Endothelial cell of umbilical vein (primary cell): ENCODE measurements at regions of chr2 and their contacts with region 1.

Region 1: GRCh38 chr2:25851740-25852503 is 26.4 kb downstream of the ASXL2 start:
- DNase-seq: peak; percentile 81
- H3K4me3 ChIP-seq: no peak overlapping the region
- H3K27ac ChIP-seq: peak overlapping the region; percentile 50
- H3K4me1 ChIP-seq: peaks cover 5% of the 10 kb centered on the region
- H3K27me3 ChIP-seq: no peaks in the 10 kb centered on the region
- CTCF ChIP-seq: peak; percentile 45 to 48
- POLR2A ChIP-seq: no peak

Region 2: GRCh38 chr2:25618642-25619037 is 233.3 kb before region 1 on chr2:
- CTCF ChIA-PET with region 1: no interaction called
- POLR2A ChIA-PET with region 1: no interaction called
- dilution Hi-C with region 1: no loop called
- intact Hi-C with region 1: loop called (anchors 10 kb)
- DNase-seq: peak; percentile 97
- H3K4me3 ChIP-seq: peak overlapping the region in 2 of 3 experiments; percentile 34 to 65
- H3K27ac ChIP-seq: peak overlapping the region; percentile 99
- H3K4me1 ChIP-seq: peaks cover 45% of the 10 kb centered on the region
- H3K27me3 ChIP-seq: no peaks in the 10 kb centered on the region
- CTCF ChIP-seq: no peak
- POLR2A ChIP-seq: no peak

Region 3: GRCh38 chr2:25835906-25836305 is 16.0 kb before region 1 on chr2:
- CTCF ChIA-PET with region 1: interaction called, 11 read pairs
- POLR2A ChIA-PET with region 1: no interaction called
- dilution Hi-C with region 1: no loop called
- intact Hi-C with region 1: no loop called
- DNase-seq: no peak
- H3K4me3 ChIP-seq: no peak overlapping the region
- H3K27ac ChIP-seq: no peak overlapping the region
- H3K4me1 ChIP-seq: no peaks in the 10 kb centered on the region
- H3K27me3 ChIP-seq: no peaks in the 10 kb centered on the region
- CTCF ChIP-seq: no peak
- POLR2A ChIP-seq: no peak

Region 4: GRCh38 chr2:25867396-25868003 is 15.6 kb after region 1 on chr2:
- CTCF ChIA-PET with region 1: interaction called, 14 read pairs
- POLR2A ChIA-PET with region 1: no interaction called
- dilution Hi-C with region 1: no loop called
- intact Hi-C with region 1: no loop called
- DNase-seq: no peak
- H3K4me3 ChIP-seq: no peak overlapping the region
- H3K27ac ChIP-seq: no peak overlapping the region
- H3K4me1 ChIP-seq: no peaks in the 10 kb centered on the region
- H3K27me3 ChIP-seq: no peaks in the 10 kb centered on the region
- CTCF ChIP-seq: no peak
- POLR2A ChIP-seq: no peak

Region 5: GRCh38 chr2:25878361-25879132 is 26.6 kb after region 1 on chr2 and contains the start of gene ASXL2:
- CTCF ChIA-PET with region 1: interaction called, 12 read pairs
- POLR2A ChIA-PET with region 1: interaction called, 3 read pairs
- dilution Hi-C with region 1: no loop called
- intact Hi-C with region 1: no loop called
- DNase-seq: peak; percentile 99
- H3K4me3 ChIP-seq: peak within 1 kb of the TSS; percentile 54 to 84 (median 77)
- H3K27ac ChIP-seq: peak within 1 kb of the TSS; percentile 67
- H3K4me1 ChIP-seq: peaks cover 16% of the 10 kb centered on the region
- H3K27me3 ChIP-seq: peaks cover 0 to 5% of the 10 kb centered on the region in 2 experiments
- CTCF ChIP-seq: no peak
- POLR2A ChIP-seq: peak; percentile 91
- total RNA-seq, gene ASXL2: 30.6 and 33.8 TPM in 2 replicates

Region 6: GRCh38 chr2:25951071-25951547 is 99.2 kb after region 1 on chr2:
- CTCF ChIA-PET with region 1: interaction called, 8 read pairs
- POLR2A ChIA-PET with region 1: no interaction called
- dilution Hi-C with region 1: no loop called
- intact Hi-C with region 1: loop called (anchors 1 kb)
- DNase-seq: peak; percentile 86
- H3K4me3 ChIP-seq: no peak overlapping the region
- H3K27ac ChIP-seq: no peak overlapping the region
- H3K4me1 ChIP-seq: no peaks in the 10 kb centered on the region
- H3K27me3 ChIP-seq: no peaks in the 10 kb centered on the region
- CTCF ChIP-seq: peak; percentile 88 to 95
- POLR2A ChIP-seq: no peak

Region 7: GRCh38 chr2:26018176-26018716 is 166.3 kb after region 1 on chr2:
- CTCF ChIA-PET with region 1: no interaction called
- POLR2A ChIA-PET with region 1: no interaction called
- dilution Hi-C with region 1: no loop called
- intact Hi-C with region 1: no loop called
- DNase-seq: peak; percentile 52
- H3K4me3 ChIP-seq: no peak overlapping the region
- H3K27ac ChIP-seq: no peak overlapping the region
- H3K4me1 ChIP-seq: peaks cover 7% of the 10 kb centered on the region
- H3K27me3 ChIP-seq: no peaks in the 10 kb centered on the region
- CTCF ChIP-seq: no peak
- POLR2A ChIP-seq: no peak

Region 8: DNA sequence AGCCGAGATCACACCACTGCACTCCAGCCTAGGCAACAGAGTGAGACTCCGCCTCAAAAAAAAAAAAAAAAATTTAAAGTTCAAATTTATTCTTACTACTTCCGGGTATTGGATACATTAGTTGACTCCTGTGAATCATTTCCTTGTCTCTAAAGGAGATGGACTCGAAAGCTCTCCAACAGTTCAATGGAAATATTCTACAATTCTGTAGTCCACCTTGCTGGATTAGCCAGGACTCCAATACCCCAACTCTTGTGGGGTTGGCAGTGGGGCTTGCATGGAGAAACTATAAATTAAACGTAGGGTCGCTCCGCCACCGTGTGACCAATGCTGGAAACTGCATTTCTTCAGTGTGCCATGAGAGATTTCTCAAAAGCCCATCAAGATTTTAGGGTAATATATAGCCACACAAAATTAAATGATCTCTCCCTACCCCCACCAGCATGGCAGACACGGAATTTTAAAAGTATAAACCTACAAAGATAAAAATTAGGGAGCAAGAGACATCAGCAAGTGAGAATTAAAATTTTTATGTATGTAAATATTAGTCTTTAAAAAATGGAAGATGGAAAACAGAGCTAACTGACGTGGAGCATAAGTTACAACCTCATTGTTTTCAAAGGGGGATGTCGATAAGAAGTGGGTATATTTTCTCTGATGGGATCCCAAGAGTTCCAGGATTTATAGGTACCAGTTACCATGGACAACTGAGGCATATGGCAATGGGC is 293.2 kb after region 1 on chr2:
- CTCF ChIA-PET with region 1: interaction called, 10 read pairs
- POLR2A ChIA-PET with region 1: no interaction called
- dilution Hi-C with region 1: no loop called
- intact Hi-C with region 1: loop called (anchors 1 kb)
- DNase-seq: peak; percentile 74
- H3K4me3 ChIP-seq: no peak overlapping the region
- H3K27ac ChIP-seq: no peak overlapping the region
- H3K4me1 ChIP-seq: peaks cover 11% of the 10 kb centered on the region
- H3K27me3 ChIP-seq: peaks cover 0 to 2% of the 10 kb centered on the region in 2 experiments
- CTCF ChIP-seq: peak; percentile 59 to 61
- POLR2A ChIP-seq: no peak